GM12878 (cell line): ENCODE measurements at regions of chr21 and their contacts with region 1.

Region 1: GRCh38 chr21:32712043-32712442 is 15.8 kb downstream of the SYNJ1 start:
- DNase-seq: peak; percentile 82
- ATAC-seq: peak; percentile 100
- H3K4me3 ChIP-seq: no peak overlapping the region
- H3K27ac ChIP-seq: no peak overlapping the region
- H3K4me1 ChIP-seq: peaks cover 18% of the 10 kb centered on the region
- H3K27me3 ChIP-seq: no peaks in the 10 kb centered on the region
- CTCF ChIP-seq: no peak
- EP300 ChIP-seq: peak; percentile 5 to 28; a peak in 1 of 4 replicates
- POLR2A ChIP-seq: no peak
- RAD21 ChIP-seq: no peak

Region 2: DNA sequence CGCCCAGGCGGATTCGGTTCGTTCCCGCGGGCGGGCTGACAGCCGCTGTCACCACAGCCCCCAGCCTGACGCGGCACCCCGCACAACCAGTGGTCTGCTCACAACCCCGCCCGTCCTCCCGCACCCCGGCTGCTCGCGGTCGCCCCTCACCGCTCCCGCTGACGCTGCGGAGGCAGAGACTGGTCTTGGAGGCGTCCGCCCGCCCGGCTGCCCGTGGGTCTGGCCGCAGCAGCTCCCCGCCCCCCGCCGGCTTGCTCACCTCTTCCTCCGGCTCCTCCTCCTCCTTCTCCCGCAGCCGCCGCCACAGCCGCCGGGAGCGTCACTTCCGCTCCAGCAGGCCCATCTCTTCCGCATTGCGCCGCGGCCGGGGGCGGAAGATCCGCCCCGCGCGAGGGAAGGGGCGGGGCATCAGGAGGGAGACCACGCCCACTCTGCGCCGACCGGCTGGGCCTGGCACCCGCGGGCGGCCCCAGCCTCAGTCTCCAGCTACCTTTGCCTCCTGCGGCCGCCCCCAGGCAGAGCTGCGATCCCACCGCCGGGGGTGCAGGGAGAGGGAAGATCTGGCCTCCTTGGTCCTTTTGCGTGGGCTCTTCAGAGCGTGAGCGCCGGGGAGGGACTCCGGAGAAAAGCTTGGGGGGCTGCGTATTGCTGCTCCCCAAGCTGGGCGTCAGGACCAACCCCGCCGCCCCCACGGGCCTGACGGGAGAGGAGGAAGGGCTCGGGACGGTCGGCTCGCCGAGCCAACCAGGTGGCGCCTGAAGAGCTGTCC is 15.8 kb after region 1 on chr21 and contains the start of gene SYNJ1:
- CTCF ChIA-PET with region 1: interaction called, 3 read pairs
- POLR2A ChIA-PET with region 1: interaction called, 5 read pairs
- RAD21 ChIA-PET with region 1: interaction called, 5 read pairs
- SMC1A ChIA-PET with region 1: interaction called, 10 read pairs
- in situ Hi-C with region 1: no loop called
- intact Hi-C with region 1: no loop called
- DNase-seq: peak; percentile 71
- ATAC-seq: peak; percentile 95
- H3K4me3 ChIP-seq: peak within 1 kb of the TSS; percentile 99
- H3K27ac ChIP-seq: peak within 1 kb of the TSS; percentile 74
- H3K4me1 ChIP-seq: no peaks in the 10 kb centered on the region
- H3K27me3 ChIP-seq: no peaks in the 10 kb centered on the region
- CTCF ChIP-seq: no peak
- EP300 ChIP-seq: peak in 1 of 2 experiments; percentile 17; a peak in 1 of 4 replicates
- POLR2A ChIP-seq: peak; percentile 91
- RAD21 ChIP-seq: no peak
- polyA plus RNA-seq, gene SYNJ1: 1.2 to 1.4 TPM